SK-N-SH (cell line): ENCODE measurements at regions of chr2 and their contacts with region 1.

Region 1: DNA sequence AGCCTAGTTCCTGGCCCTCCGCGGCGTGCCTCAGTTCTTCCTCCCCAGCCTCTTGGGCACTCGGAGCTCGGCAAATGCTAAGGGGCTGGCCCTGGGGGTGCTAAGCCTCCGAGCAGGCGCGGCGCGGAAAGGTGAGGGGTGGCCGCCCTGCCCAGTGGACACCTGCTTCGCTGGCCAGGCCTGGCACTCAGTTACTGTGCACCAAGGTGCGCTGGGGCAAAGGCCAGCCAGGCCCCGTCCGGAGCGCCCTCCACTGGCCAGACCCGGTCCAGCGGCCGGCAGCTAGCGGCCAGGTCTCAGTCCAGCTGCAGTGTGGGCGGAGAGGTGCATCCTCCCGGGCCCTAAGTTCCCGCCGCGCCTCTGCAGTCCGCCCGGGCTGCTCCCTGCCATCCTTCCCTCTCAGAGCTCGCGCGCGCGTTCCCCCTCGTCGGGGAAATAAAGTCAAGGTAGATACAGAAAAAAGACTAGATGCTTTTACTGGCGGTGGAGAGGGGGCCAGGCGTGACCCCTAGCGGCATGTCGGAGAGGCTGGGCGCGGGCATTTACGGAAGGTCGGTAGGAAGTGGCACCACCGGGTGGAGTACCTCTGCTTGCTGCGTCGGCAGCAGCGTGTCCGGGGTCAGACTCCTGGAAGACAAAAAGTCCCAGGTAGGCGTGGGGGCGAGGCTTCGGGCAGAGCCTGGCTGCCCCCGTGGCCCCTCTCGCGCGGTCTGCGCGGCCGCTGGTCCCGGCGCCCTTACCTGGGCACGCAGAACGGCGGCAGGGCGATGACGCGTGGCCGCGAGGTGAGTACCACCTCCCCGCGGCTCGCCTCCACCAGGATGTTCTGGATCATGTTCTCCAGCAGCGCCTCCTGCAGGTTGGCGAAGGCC is 9.4 kb upstream of the CRYBA2 start:
- DNase-seq: peak; percentile 89
- H3K4me3 ChIP-seq: peak overlapping the region; percentile 51 to 54
- H3K27ac ChIP-seq: peak overlapping the region in 1 of 2 experiments; percentile 99; a peak in 2 of 4 replicates
- H3K4me1 ChIP-seq: peaks cover 0 to 60% of the 10 kb centered on the region in 2 experiments; a peak in 2 of 4 replicates
- H3K27me3 ChIP-seq: peaks cover 18% of the 10 kb centered on the region; the same call in 1 of the 2 replicates
- CTCF ChIP-seq: peak; percentile 35; the same call in 1 of the 2 replicates
- EP300 ChIP-seq: no peak
- RAD21 ChIP-seq: peak; percentile 66

Region 2: GRCh38 chr2:218898109-218898878 is 104.3 kb before region 1 on chr2:
- CTCF ChIA-PET with region 1: interaction called, 29 read pairs
- POLR2A ChIA-PET with region 1: interaction called, 4 read pairs
- DNase-seq: peak; percentile 94
- H3K4me3 ChIP-seq: peak overlapping the region; percentile 25 to 33; a peak in 2 of 4 replicates
- H3K27ac ChIP-seq: no peak overlapping the region
- H3K4me1 ChIP-seq: peaks cover 0 to 25% of the 10 kb centered on the region in 2 experiments; a peak in 1 of 4 replicates
- H3K27me3 ChIP-seq: peaks cover 46% of the 10 kb centered on the region
- CTCF ChIP-seq: peak; percentile 92
- EP300 ChIP-seq: no peak
- RAD21 ChIP-seq: peak; percentile 81

Region 3: GRCh38 chr2:218986148-218986761 is 16.4 kb before region 1 on chr2:
- CTCF ChIA-PET with region 1: interaction called, 183 read pairs
- POLR2A ChIA-PET with region 1: interaction called, 89 read pairs
- DNase-seq: no peak
- H3K4me3 ChIP-seq: no peak overlapping the region
- H3K27ac ChIP-seq: peak overlapping the region in 1 of 2 experiments; percentile 89; a peak in 2 of 4 replicates
- H3K4me1 ChIP-seq: peaks cover 0 to 31% of the 10 kb centered on the region in 2 experiments; a peak in 2 of 4 replicates
- H3K27me3 ChIP-seq: peaks cover 42% of the 10 kb centered on the region
- CTCF ChIP-seq: no peak
- EP300 ChIP-seq: no peak
- RAD21 ChIP-seq: no peak

Region 4: DNA sequence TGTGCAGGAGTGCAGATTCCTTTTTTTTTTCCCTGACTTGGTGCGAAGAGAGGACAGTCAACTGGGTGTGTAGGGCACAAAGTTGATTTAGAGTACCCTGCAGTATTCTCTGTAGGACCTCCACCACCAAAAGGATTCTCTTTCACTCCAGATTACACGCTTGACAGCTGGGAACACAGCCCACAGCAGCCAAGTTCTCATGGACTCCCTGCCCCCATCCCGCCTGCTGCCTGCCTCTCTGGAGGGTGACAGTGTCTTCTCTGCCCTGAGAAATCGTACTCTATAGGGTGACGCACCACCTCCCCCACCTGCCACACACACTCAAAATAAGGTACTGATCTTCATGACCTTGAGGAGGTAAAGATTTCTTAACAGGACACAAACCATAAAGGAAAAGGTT is 84.7 kb after region 1 on chr2:
- CTCF ChIA-PET with region 1: interaction called, 12 read pairs
- POLR2A ChIA-PET with region 1: no interaction called
- DNase-seq: no peak
- H3K4me3 ChIP-seq: no peak overlapping the region
- H3K27ac ChIP-seq: no peak overlapping the region
- H3K4me1 ChIP-seq: no peaks in the 10 kb centered on the region
- H3K27me3 ChIP-seq: no peaks in the 10 kb centered on the region
- CTCF ChIP-seq: no peak
- EP300 ChIP-seq: no peak
- RAD21 ChIP-seq: no peak

Region 5: DNA sequence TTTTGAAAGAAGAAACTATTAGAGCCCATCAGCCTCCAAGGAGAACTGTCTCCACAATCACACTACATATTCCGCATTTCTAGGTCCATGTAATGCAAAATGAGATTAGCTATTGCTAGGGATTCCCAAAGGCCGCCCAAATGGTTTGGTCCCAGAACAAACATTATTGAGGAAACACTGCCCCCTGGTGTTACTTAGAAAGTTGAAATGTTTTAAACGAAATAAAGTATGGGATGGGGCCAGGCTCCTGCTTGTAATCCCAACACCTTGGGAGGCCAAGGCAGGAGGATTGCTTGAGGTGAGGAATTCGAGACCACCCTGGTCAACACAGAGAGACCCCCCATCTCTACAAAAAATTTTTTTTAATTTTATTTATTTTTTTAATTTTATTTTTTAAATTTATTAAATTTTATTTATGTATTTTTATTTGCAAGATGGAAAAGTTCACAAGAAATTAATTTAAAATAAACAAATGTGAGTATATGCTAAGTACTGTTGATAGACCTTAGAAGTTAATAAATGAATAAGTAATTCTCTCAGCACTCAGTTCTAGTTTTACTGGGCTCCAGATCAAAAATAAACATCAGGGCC is 152.5 kb after region 1 on chr2:
- CTCF ChIA-PET with region 1: interaction called, 34 read pairs
- POLR2A ChIA-PET with region 1: interaction called, 4 read pairs
- DNase-seq: peak; percentile 73
- H3K4me3 ChIP-seq: no peak overlapping the region
- H3K27ac ChIP-seq: no peak overlapping the region
- H3K4me1 ChIP-seq: peaks cover 0 to 5% of the 10 kb centered on the region in 2 experiments; a peak in 1 of 4 replicates
- H3K27me3 ChIP-seq: no peaks in the 10 kb centered on the region
- CTCF ChIP-seq: peak; percentile 67
- EP300 ChIP-seq: no peak
- RAD21 ChIP-seq: peak; percentile 90

Region 6: DNA sequence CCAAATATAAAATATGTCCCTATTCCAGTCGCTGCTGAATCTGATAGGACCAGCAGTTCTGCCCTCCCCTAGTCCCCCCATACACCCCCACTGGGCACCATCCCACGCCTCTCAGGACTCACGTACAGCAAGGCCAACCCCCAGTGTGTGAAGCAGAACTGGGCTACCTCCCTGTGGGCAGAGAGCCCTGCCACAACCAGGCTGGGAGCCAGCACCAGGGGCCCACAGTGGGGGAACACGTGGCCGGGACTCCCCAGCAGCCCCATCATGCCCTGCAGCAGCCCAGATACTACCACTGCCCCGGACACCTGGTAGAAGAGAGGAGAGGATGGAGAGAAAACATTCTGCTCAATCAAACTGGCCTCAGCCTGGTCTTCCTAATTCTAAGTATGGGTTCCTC is 165.9 kb after region 1 on chr2:
- CTCF ChIA-PET with region 1: no interaction called
- POLR2A ChIA-PET with region 1: no interaction called
- DNase-seq: no peak
- H3K4me3 ChIP-seq: no peak overlapping the region
- H3K27ac ChIP-seq: no peak overlapping the region
- H3K4me1 ChIP-seq: no peaks in the 10 kb centered on the region; a peak in 1 of 4 replicates
- H3K27me3 ChIP-seq: no peaks in the 10 kb centered on the region
- CTCF ChIP-seq: no peak
- EP300 ChIP-seq: no peak
- RAD21 ChIP-seq: no peak

Region 7: GRCh38 chr2:219418155-219418569 is 415.5 kb after region 1 on chr2 and contains the start of gene DES:
- CTCF ChIA-PET with region 1: no interaction called
- POLR2A ChIA-PET with region 1: no interaction called
- DNase-seq: no peak
- H3K4me3 ChIP-seq: no peak within 1 kb of the TSS
- H3K27ac ChIP-seq: no peak within 1 kb of the TSS
- H3K4me1 ChIP-seq: no peaks in the 10 kb centered on the region; a peak in 1 of 4 replicates
- H3K27me3 ChIP-seq: no peaks in the 10 kb centered on the region
- CTCF ChIP-seq: no peak
- EP300 ChIP-seq: no peak
- RAD21 ChIP-seq: no peak
- polyA plus RNA-seq, gene DES: 0.21 and 0.28 TPM in 2 replicates